ENCODE measurements at regions of chr18 and their contacts with region 1.

Region 1: GRCh38 chr18:32092422-32093101 is 888 bp downstream of the RNF138 start:
- DNase-seq: peak; percentile 99
- H3K4me3 Mint-ChIP-seq: peak overlapping the region; percentile 96
- H3K27ac Mint-ChIP-seq: peak overlapping the region; percentile 97
- H3K4me1 Mint-ChIP-seq: peaks cover 47% of the 10 kb centered on the region
- H3K27me3 Mint-ChIP-seq: no peaks in the 10 kb centered on the region

Region 2: GRCh38 chr18:31942999-31943865 is 149.3 kb before region 1 on chr18 and contains the start of gene TRAPPC8:
- CTCF ChIA-PET with region 1: interaction called, 6 read pairs
- POLR2A ChIA-PET with region 1: interaction called, 54 read pairs
- DNase-seq: peak; percentile 94
- H3K4me3 Mint-ChIP-seq: peak within 1 kb of the TSS; percentile 100
- H3K27ac Mint-ChIP-seq: peak within 1 kb of the TSS; percentile 98
- H3K4me1 Mint-ChIP-seq: peaks cover 51% of the 10 kb centered on the region
- H3K27me3 Mint-ChIP-seq: no peaks in the 10 kb centered on the region
- total RNA-seq, gene TRAPPC8: 40.1 to 42.7 TPM

Region 3: DNA sequence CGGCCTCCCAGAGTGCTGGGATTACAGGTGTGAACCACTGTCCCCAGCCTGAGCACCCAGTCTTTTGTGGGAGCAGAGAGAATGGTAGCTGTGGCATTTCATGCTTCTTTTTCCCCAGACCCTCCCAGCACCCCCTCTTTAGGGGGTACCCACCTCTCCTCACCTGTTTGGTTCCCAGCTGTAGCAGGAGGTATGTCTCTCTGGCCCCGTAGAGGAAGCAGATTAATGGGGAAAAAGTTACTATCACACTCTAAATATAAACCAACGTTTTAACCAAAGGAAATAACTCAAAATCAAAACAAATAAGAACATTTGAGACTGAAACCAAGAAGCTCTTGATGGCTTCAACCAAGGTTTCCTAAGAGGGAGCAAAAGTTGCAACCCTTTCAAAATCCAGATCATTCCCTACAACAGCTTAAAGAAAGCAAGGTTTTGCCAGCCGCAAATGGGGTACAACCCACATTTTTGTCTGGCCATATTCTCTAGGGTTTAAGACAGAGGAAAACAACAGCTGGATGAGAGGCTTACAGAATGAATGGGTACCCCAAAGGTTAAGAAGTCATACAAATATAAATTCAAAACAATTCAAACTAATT is 66.0 kb before region 1 on chr18:
- CTCF ChIA-PET with region 1: no interaction called
- POLR2A ChIA-PET with region 1: interaction called, 166 read pairs
- DNase-seq: no peak
- H3K4me3 Mint-ChIP-seq: peak overlapping the region; percentile 59
- H3K27ac Mint-ChIP-seq: peak overlapping the region; percentile 78
- H3K4me1 Mint-ChIP-seq: peaks cover 78% of the 10 kb centered on the region
- H3K27me3 Mint-ChIP-seq: no peaks in the 10 kb centered on the region

Region 4: GRCh38 chr18:32040936-32041335 is 51.6 kb before region 1 on chr18:
- CTCF ChIA-PET with region 1: no interaction called
- POLR2A ChIA-PET with region 1: interaction called, 31 read pairs
- DNase-seq: peak; percentile 79
- H3K4me3 Mint-ChIP-seq: peak overlapping the region; percentile 55
- H3K27ac Mint-ChIP-seq: peak overlapping the region; percentile 96
- H3K4me1 Mint-ChIP-seq: peaks cover 67% of the 10 kb centered on the region
- H3K27me3 Mint-ChIP-seq: no peaks in the 10 kb centered on the region

Region 5: DNA sequence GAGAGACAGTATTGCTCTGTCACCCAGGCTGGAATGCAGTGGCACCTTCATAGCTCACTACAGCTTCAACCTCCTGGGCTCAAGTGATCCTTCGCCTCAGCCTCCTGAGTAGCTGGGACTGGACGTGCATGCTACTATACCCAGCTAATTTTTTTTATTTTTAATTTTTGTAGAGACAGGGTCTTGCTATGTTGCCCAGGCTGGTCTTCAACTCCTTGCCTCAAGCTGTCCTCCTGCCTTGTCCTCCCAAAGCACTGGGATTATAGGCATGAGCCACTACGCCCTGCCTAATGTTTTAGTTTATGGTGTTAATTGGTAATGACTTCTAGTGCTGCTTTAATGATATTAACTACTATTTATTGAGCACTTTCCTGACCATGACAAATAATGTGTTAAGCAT is 17.4 kb after region 1 on chr18:
- CTCF ChIA-PET with region 1: interaction called, 3 read pairs
- POLR2A ChIA-PET with region 1: interaction called, 16 read pairs
- DNase-seq: no peak
- H3K4me3 Mint-ChIP-seq: no peak overlapping the region
- H3K27ac Mint-ChIP-seq: no peak overlapping the region
- H3K4me1 Mint-ChIP-seq: peaks cover 42% of the 10 kb centered on the region
- H3K27me3 Mint-ChIP-seq: no peaks in the 10 kb centered on the region

Region 6: GRCh38 chr18:32122039-32122438 is 29.5 kb after region 1 on chr18:
- CTCF ChIA-PET with region 1: no interaction called
- POLR2A ChIA-PET with region 1: no interaction called
- DNase-seq: no peak
- H3K4me3 Mint-ChIP-seq: no peak overlapping the region
- H3K27ac Mint-ChIP-seq: no peak overlapping the region
- H3K4me1 Mint-ChIP-seq: peaks cover 13% of the 10 kb centered on the region
- H3K27me3 Mint-ChIP-seq: no peaks in the 10 kb centered on the region